ENCODE measurements at regions of chr7 and their contacts with region 1.

Region 1: GRCh38 chr7:128343554-128344430 is at the start of gene RBM28:
- DNase-seq: peak; percentile 74 to 93 (median 83)
- ATAC-seq: peak; percentile 94
- H3K4me3 ChIP-seq: peak within 1 kb of the TSS; percentile 78 to 87
- H3K4me3 Mint-ChIP-seq: peak within 1 kb of the TSS; percentile 95
- H3K27ac ChIP-seq: peak within 1 kb of the TSS; percentile 60 to 67
- H3K27ac Mint-ChIP-seq: peak within 1 kb of the TSS; percentile 94
- H3K4me1 ChIP-seq: peaks cover 26% of the 10 kb centered on the region
- H3K4me1 Mint-ChIP-seq: peaks cover 35% of the 10 kb centered on the region
- H3K27me3 ChIP-seq: no peaks in the 10 kb centered on the region
- H3K27me3 Mint-ChIP-seq: peaks cover 3% of the 10 kb centered on the region
- CTCF ChIP-seq: no peak
- total RNA-seq, gene RBM28: 13.1 to 14.7 TPM

Region 2: GRCh38 chr7:127392566-127393367 is 951.0 kb before region 1 on chr7 and contains the start of gene ZNF800:
- CTCF ChIA-PET with region 1: no interaction called
- POLR2A ChIA-PET with region 1: no interaction called
- intact Hi-C with region 1: loop called (anchors 10 kb)
- DNase-seq: peak; percentile 73 to 94 (median 86)
- ATAC-seq: peak; percentile 76
- H3K4me3 ChIP-seq: peak within 1 kb of the TSS; percentile 87 to 92
- H3K4me3 Mint-ChIP-seq: peak within 1 kb of the TSS; percentile 96
- H3K27ac ChIP-seq: peak within 1 kb of the TSS; percentile 95 to 99
- H3K27ac Mint-ChIP-seq: peak within 1 kb of the TSS; percentile 98
- H3K4me1 ChIP-seq: peaks cover 45% of the 10 kb centered on the region
- H3K4me1 Mint-ChIP-seq: peaks cover 61% of the 10 kb centered on the region
- H3K27me3 ChIP-seq: no peaks in the 10 kb centered on the region
- H3K27me3 Mint-ChIP-seq: no peaks in the 10 kb centered on the region
- CTCF ChIP-seq: no peak
- total RNA-seq, gene ZNF800: 80.7 to 82.5 TPM

Region 3: GRCh38 chr7:127858091-127858914 is 485.5 kb before region 1 on chr7:
- CTCF ChIA-PET with region 1: no interaction called
- POLR2A ChIA-PET with region 1: no interaction called
- intact Hi-C with region 1: loop called in 1 of 2 experiments (anchors 10 kb)
- DNase-seq: no peak
- ATAC-seq: no peak
- H3K4me3 ChIP-seq: no peak overlapping the region
- H3K4me3 Mint-ChIP-seq: no peak overlapping the region
- H3K27ac ChIP-seq: no peak overlapping the region
- H3K27ac Mint-ChIP-seq: no peak overlapping the region
- H3K4me1 ChIP-seq: peaks cover 42% of the 10 kb centered on the region
- H3K4me1 Mint-ChIP-seq: peaks cover 48% of the 10 kb centered on the region
- H3K27me3 ChIP-seq: peaks cover 0 to 3% of the 10 kb centered on the region in 2 experiments
- H3K27me3 Mint-ChIP-seq: peaks cover 14% of the 10 kb centered on the region
- CTCF ChIP-seq: no peak

Region 4: GRCh38 chr7:128361411-128362379 is 17.9 kb after region 1 on chr7 and contains the start of gene PRRT4:
- CTCF ChIA-PET with region 1: interaction called, 5 read pairs
- POLR2A ChIA-PET with region 1: no interaction called
- intact Hi-C with region 1: loop called in 1 of 2 experiments (anchors 2 kb)
- DNase-seq: peak in 7 of 9 experiments; percentile 14 to 68 (median 61)
- ATAC-seq: peak; percentile 71
- H3K4me3 ChIP-seq: peak within 1 kb of the TSS; percentile 41 to 47
- H3K4me3 Mint-ChIP-seq: peak within 1 kb of the TSS; percentile 86
- H3K27ac ChIP-seq: no peak within 1 kb of the TSS
- H3K27ac Mint-ChIP-seq: no peak within 1 kb of the TSS
- H3K4me1 ChIP-seq: peaks cover 13% of the 10 kb centered on the region
- H3K4me1 Mint-ChIP-seq: peaks cover 14% of the 10 kb centered on the region
- H3K27me3 ChIP-seq: peaks cover 0 to 16% of the 10 kb centered on the region in 2 experiments
- H3K27me3 Mint-ChIP-seq: peaks cover 50% of the 10 kb centered on the region
- CTCF ChIP-seq: no peak
- total RNA-seq, gene PRRT4: 0.28 TPM in 1 of 2 experiments, not detected in the other

Region 5: GRCh38 chr7:128409596-128410160 is 65.9 kb after region 1 on chr7 and contains the start of gene IMPDH1:
- CTCF ChIA-PET with region 1: interaction called, 6 read pairs
- POLR2A ChIA-PET with region 1: interaction called, 4 read pairs
- intact Hi-C with region 1: loop called (anchors 1 to 5 kb)
- DNase-seq: peak; percentile 65 to 92 (median 86)
- ATAC-seq: peak; percentile 75
- H3K4me3 ChIP-seq: peak within 1 kb of the TSS; percentile 93 to 99
- H3K4me3 Mint-ChIP-seq: peak within 1 kb of the TSS; percentile 91
- H3K27ac ChIP-seq: peak within 1 kb of the TSS; percentile 74 to 84
- H3K27ac Mint-ChIP-seq: peak within 1 kb of the TSS; percentile 84
- H3K4me1 ChIP-seq: peaks cover 37% of the 10 kb centered on the region
- H3K4me1 Mint-ChIP-seq: peaks cover 40% of the 10 kb centered on the region
- H3K27me3 ChIP-seq: no peaks in the 10 kb centered on the region
- H3K27me3 Mint-ChIP-seq: no peaks in the 10 kb centered on the region
- CTCF ChIP-seq: no peak
- total RNA-seq, gene IMPDH1: 19.6 to 20.6 TPM

Region 6: DNA sequence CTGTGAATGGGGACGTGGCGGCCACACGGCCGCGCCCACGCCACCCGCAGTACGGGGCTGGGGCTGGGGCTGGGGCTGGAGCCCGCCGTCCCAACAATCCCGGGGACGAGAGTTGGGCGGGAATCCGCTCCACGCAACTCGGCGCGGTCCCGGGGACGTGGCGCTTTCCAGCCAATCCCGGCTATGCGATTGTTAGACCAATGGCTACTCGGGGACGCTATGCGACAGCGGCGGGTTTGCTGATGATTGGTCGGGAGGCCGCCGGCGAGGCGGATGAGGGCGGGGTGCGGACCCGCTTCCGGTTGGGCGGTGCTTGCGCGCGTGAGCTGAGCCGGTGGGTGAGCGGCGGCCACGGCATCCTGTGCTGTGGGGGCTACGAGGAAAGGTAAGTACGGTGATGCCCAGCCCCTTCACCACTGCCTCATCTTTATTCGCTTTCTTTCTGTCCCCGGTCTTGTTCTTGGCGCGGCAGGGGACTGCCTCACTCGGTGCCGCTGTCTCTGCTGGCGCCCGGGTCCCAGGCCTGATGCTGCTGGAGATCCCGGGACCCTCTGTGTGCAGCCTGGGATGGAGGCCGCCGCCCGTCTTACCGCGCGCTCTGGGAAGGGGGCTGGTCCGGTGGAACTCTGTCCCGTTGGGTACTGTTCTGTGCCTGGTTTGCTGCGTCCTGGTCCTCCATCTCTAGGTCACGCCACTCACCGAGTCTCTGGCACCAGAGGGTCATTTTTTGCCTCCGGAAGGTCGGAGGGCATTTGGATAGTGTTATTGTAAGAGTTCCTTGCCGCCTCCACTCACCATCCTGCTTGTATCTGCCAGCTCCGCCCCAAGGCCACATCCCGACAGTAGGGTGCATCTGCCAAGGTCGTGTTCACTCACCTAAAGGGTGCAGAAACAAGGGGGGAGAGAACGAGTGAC is 395.5 kb after region 1 on chr7 and contains the start of gene CALU:
- CTCF ChIA-PET with region 1: no interaction called
- POLR2A ChIA-PET with region 1: no interaction called
- intact Hi-C with region 1: loop called (anchors 1 to 5 kb)
- DNase-seq: peak; percentile 84 to 96 (median 94)
- ATAC-seq: peak; percentile 91
- H3K4me3 ChIP-seq: peak within 1 kb of the TSS; percentile 90 to 93
- H3K4me3 Mint-ChIP-seq: peak within 1 kb of the TSS; percentile 98
- H3K27ac ChIP-seq: peak within 1 kb of the TSS; percentile 90 to 92
- H3K27ac Mint-ChIP-seq: peak within 1 kb of the TSS; percentile 96
- H3K4me1 ChIP-seq: peaks cover 18% of the 10 kb centered on the region
- H3K4me1 Mint-ChIP-seq: peaks cover 44% of the 10 kb centered on the region
- H3K27me3 ChIP-seq: no peaks in the 10 kb centered on the region
- H3K27me3 Mint-ChIP-seq: no peaks in the 10 kb centered on the region
- CTCF ChIP-seq: no peak
- total RNA-seq, gene CALU: 29.9 to 31.9 TPM

Region 7: DNA sequence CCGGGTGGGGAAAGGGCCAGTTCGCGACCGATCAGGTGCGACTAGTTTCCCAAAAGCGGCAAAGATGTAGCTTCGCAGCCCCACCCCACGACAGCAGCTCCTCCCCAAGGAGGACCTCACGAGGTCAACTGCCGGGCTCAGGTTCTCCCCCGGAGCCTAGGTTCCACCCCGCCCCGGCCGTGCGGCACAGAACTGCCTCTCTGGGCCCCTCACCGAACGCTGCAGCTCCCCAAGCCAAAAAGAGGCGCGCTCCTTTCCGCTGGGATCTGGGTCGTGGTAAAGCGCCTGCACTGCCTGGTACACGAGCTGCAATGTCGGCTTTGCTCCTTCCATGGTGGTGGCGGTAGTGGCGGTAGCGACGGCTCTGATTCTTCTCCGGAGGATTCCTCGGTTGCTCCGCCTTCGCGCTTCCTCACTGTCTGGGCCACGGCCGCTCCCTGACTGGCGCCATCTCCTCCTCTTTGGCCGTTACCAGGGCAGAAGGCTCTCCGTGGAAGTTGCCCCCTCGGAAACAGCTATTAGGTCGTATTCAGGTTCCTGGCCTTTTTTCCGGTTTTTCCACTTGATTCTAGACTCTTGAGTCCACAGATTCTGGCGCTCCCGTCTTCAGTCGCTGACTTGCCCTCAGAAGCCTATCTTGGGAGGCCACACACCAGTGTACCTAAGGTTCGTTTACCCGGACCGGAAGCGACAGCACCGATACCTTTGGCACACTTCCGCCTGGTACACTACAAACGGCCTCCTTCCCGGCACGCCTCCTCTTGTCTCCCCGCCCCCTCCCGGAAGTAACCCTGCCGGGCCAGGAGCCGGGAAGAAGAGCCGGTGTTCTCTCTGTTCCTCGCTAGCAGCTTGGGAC is 710.9 kb after region 1 on chr7 and contains the start of gene TNPO3:
- CTCF ChIA-PET with region 1: no interaction called
- POLR2A ChIA-PET with region 1: no interaction called
- intact Hi-C with region 1: loop called (anchors 2 to 10 kb)
- DNase-seq: peak; percentile 77 to 94 (median 90)
- ATAC-seq: peak; percentile 86
- H3K4me3 ChIP-seq: peak within 1 kb of the TSS; percentile 80 to 89
- H3K4me3 Mint-ChIP-seq: peak within 1 kb of the TSS; percentile 96
- H3K27ac ChIP-seq: peak within 1 kb of the TSS; percentile 84 to 93
- H3K27ac Mint-ChIP-seq: peak within 1 kb of the TSS; percentile 98
- H3K4me1 ChIP-seq: peaks cover 29% of the 10 kb centered on the region
- H3K4me1 Mint-ChIP-seq: peaks cover 38% of the 10 kb centered on the region
- H3K27me3 ChIP-seq: no peaks in the 10 kb centered on the region
- H3K27me3 Mint-ChIP-seq: peaks cover 3% of the 10 kb centered on the region
- CTCF ChIP-seq: no peak
- total RNA-seq, gene TNPO3: 17.0 to 17.2 TPM

Measured in CD8-positive, alpha-beta T cell (primary cell).